Activated CD8-positive, alpha-beta memory T cell treated with anti-CD3 and anti-CD28 coated beads, Interleukin-2, amount 10 ng/mL, durations not matched to agents 7 days and 5 days (primary cell): ENCODE measurements at regions of chr3 and their contacts with region 1.

Region 1: GRCh38 chr3:197599089-197599765 is 43.5 kb upstream of the BDH1 start:
- DNase-seq: peak; percentile 87
- ATAC-seq: peak; percentile 98
- H3K4me3 Mint-ChIP-seq: no peak overlapping the region
- H3K27ac Mint-ChIP-seq: no peak overlapping the region
- H3K4me1 Mint-ChIP-seq: peaks cover 8% of the 10 kb centered on the region
- H3K27me3 Mint-ChIP-seq: peaks cover 11% of the 10 kb centered on the region

Region 2: GRCh38 chr3:197613199-197613598 is 14.0 kb after region 1 on chr3:
- CTCF ChIA-PET with region 1: interaction called, 57 read pairs
- DNase-seq: no peak
- ATAC-seq: peak; percentile 82
- H3K4me3 Mint-ChIP-seq: no peak overlapping the region
- H3K27ac Mint-ChIP-seq: peak overlapping the region; percentile 66
- H3K4me1 Mint-ChIP-seq: peaks cover 15% of the 10 kb centered on the region
- H3K27me3 Mint-ChIP-seq: no peaks in the 10 kb centered on the region

Region 3: DNA sequence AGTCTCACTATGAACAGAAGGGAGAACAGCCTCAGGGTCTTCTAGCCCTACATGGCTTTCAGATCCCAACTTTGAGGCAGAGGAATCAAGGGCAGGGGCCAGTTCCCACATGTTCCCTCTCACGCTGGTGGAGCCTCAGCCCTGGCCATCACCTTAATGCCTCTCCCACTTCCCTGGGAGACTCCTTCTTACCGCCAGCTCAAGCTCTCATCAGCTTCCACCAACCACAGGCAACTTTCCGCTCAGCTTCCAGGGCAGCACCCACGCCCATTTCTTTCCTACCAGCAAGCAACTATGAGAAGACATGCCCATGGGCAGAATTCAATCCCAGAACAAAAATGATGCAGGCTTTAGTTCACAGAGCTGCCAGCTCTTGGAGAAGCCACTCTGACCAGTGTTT is 73.9 kb after region 1 on chr3:
- CTCF ChIA-PET with region 1: interaction called, 24 read pairs
- DNase-seq: no peak
- ATAC-seq: no peak
- H3K4me3 Mint-ChIP-seq: no peak overlapping the region
- H3K27ac Mint-ChIP-seq: no peak overlapping the region
- H3K4me1 Mint-ChIP-seq: no peaks in the 10 kb centered on the region
- H3K27me3 Mint-ChIP-seq: no peaks in the 10 kb centered on the region

Region 4: GRCh38 chr3:197685546-197685945 is 86.3 kb after region 1 on chr3:
- CTCF ChIA-PET with region 1: interaction called, 12 read pairs
- DNase-seq: no peak
- ATAC-seq: no peak
- H3K4me3 Mint-ChIP-seq: no peak overlapping the region
- H3K27ac Mint-ChIP-seq: peak overlapping the region; percentile 2
- H3K4me1 Mint-ChIP-seq: peaks cover 11% of the 10 kb centered on the region
- H3K27me3 Mint-ChIP-seq: no peaks in the 10 kb centered on the region